T-cell (primary cell): ENCODE measurements at regions of chr6 and their contacts with region 1.

Region 1: GRCh38 chr6:170290306-170291128 is at the start of gene DLL1:
- DNase-seq: peak in 8 of 35 experiments; percentile 26 to 59 (median 34)
- ATAC-seq: peak; percentile 17 to 33 (median 23)
- H3K4me3 ChIP-seq: peak within 1 kb of the TSS; percentile 75 to 93
- H3K4me3 Mint-ChIP-seq: peak within 1 kb of the TSS; percentile 87 to 97 (median 90)
- H3K27ac ChIP-seq: no peak within 1 kb of the TSS
- H3K27ac Mint-ChIP-seq: peak within 1 kb of the TSS in 1 of 2 donors; percentile 44
- H3K4me1 ChIP-seq: peaks cover 34 to 67% of the 10 kb centered on the region in 2 experiments
- H3K4me1 Mint-ChIP-seq: peaks cover 49 to 52% (median 49%) of the 10 kb centered on the region in 3 donors
- H3K27me3 ChIP-seq: peaks cover 12 to 85% of the 10 kb centered on the region in 2 experiments
- H3K27me3 Mint-ChIP-seq: peaks cover 19 to 45% of the 10 kb centered on the region in 2 donors
- total RNA-seq, gene DLL1: 3.3 to 8.6 (median 4.7) TPM

Region 2: GRCh38 chr6:169940481-169941271 is 349.8 kb before region 1 on chr6:
- CTCF ChIA-PET with region 1: no interaction called
- POLR2A ChIA-PET with region 1: interaction called in 1 of 2 experiments, 10 read pairs
- DNase-seq: no peak
- ATAC-seq: no peak
- H3K4me3 ChIP-seq: no peak overlapping the region
- H3K4me3 Mint-ChIP-seq: no peak overlapping the region
- H3K27ac ChIP-seq: no peak overlapping the region
- H3K27ac Mint-ChIP-seq: no peak overlapping the region
- H3K4me1 ChIP-seq: no peaks in the 10 kb centered on the region
- H3K4me1 Mint-ChIP-seq: no peaks in the 10 kb centered on the region
- H3K27me3 ChIP-seq: peaks cover 0 to 45% of the 10 kb centered on the region in 2 experiments
- H3K27me3 Mint-ChIP-seq: peaks cover 20 to 37% of the 10 kb centered on the region in 2 donors

Region 3: GRCh38 chr6:170405311-170405975 is 114.9 kb after region 1 on chr6:
- CTCF ChIA-PET with region 1: no interaction called
- POLR2A ChIA-PET with region 1: no interaction called
- DNase-seq: no peak
- ATAC-seq: no peak
- H3K4me3 ChIP-seq: no peak overlapping the region
- H3K4me3 Mint-ChIP-seq: no peak overlapping the region
- H3K27ac ChIP-seq: no peak overlapping the region
- H3K27ac Mint-ChIP-seq: peak overlapping the region in 1 of 2 donors; percentile 29
- H3K4me1 ChIP-seq: no peaks in the 10 kb centered on the region
- H3K4me1 Mint-ChIP-seq: no peaks in the 10 kb centered on the region
- H3K27me3 ChIP-seq: no peaks in the 10 kb centered on the region
- H3K27me3 Mint-ChIP-seq: no peaks in the 10 kb centered on the region